Left cardiac atrium (tissue), 4 donors: ENCODE measurements at regions of chr2 and their contacts with region 1.

Region 1: GRCh38 chr2:3423492-3424175 is 44.1 kb downstream of the TRAPPC12 start:
- DNase-seq: peak; percentile 62
- ATAC-seq: peak; percentile 58 to 72

Region 2: DNA sequence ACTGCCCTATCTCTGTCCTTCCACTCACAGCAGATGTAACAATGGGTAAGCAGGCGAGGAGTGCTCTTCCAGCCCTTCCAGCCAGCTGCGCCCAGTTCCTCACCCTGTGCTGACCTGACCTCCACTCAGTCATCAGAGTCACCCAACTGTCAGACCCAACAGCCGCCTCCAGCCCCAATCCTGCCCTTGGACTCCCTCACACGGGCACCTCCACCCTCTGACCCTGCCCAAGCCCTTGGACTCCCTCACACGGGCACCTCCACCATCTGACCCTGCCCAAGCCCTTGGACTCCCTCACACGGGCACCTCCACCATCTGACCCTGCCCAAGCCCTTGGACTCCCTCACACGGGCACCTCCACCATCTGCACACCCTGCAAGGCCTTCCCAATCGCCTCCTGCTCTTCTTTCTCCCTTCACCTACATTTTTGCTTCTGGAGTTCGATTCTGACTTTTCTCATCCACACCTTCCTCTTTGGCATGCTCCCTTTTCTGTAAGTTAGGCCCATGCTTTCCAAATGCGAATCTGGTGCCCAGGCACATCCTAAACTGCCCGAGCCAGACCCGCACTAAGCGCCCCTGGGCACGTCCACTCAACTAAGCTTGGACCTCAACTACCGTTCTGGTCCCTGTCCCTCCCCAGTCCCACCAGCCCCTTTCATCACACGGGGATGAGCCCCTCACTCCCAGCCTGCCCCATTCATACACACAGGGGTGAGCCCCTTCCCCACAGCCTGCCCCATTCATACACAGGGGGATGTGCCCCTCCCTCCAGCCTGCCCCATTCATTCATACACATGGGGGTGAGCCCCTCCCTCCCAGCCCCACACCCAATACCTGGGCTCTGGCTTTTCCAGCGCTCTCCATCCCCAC is 61.9 kb before region 1 on chr2:
- intact Hi-C with region 1: no loop called
- DNase-seq: no peak
- ATAC-seq: no peak

Region 3: GRCh38 chr2:3461801-3462492 is 38.3 kb after region 1 on chr2:
- intact Hi-C with region 1: loop called in 1 of 2 experiments (anchors 5 kb)
- DNase-seq: no peak
- ATAC-seq: no peak

Region 4: DNA sequence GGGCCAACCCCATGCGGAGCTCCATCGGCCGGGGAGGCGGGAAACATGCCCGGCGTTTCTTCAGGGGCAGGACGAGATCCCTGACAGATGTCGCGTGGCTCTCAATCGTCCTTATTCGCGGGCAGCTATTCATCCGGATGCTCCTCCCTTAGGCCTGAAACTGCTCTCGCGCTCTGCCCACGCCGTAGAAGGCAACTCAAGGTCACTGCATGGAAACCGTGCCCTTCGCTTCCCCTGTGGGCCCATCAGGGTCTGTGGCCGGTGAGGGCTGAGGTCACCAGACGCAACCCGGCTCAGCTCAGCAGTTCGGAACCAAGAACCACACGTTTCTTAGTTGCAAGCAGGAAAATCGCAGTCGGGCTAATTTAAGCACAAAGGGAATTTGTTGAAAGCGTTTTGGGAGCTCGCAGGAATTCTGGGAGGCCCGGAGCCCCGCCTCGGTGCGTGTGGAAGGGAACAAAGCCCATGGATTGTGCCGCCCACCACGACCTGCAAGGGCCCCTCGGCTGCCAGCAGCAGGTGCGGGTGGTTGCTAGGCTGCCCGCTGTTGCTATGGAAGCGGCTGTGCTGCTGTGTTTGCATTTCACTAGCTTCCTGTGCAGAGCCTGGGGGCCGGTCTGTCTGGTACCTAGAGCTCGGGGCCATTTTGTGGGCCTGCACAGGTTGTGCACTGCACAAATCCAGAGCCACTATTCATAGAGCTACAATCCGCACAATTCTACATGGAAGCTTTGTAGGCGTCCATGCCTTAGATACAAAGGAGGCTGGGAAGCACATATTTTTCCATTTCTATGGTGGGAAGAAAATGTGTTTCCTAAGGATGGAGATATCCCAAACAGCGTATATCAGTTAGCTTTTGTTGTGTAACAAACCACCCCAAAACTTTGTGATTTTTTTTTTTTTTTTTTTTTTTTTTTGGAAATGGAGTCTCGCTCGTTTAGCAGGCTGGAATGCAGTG is 228.3 kb after region 1 on chr2:
- intact Hi-C with region 1: loop called in 1 of 2 experiments (anchors 5 kb)
- DNase-seq: peak; percentile 51
- ATAC-seq: peak; percentile 58 to 68

Region 5: DNA sequence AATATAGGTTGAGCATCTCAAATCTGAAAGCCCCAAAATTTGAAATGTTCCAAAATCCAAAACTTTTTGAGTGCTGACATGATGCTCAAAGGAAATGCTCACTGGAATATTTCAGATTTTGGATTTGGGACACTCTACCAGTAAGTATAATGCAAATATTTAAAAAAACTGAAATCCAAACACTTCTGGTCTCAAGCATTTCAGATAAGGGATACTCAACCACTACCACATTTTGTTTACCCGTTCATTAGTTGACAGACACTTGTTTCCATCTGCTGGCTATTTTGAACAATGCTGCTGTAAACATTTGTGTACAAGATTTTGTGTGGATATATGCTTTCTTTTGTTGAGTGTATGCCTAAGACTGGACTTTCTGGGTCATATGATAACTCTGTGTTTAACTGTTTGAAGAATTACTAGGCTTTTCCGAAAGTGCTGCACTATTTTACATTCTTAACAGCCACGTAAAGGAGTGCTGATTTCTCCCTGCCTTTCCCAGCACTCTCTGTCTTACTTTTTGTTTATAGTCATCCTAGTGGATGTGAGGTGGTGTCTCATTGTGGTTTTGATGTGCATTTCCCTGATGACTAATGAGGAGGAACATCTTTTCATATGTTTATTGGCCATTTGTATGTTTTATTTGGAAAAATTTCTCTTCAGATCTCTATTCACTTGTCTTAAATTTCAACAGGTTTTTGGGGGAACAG is 260.3 kb after region 1 on chr2:
- intact Hi-C with region 1: no loop called
- DNase-seq: no peak
- ATAC-seq: no peak